ENCODE measurements at regions of chr1 and their contacts with region 1.

Region 1: GRCh38 chr1:173212952-173213491 is 5.9 kb upstream of the TNFSF4 start:
- DNase-seq: no peak
- H3K4me3 ChIP-seq: no peak overlapping the region
- H3K27ac ChIP-seq: no peak overlapping the region
- H3K4me1 ChIP-seq: no peaks in the 10 kb centered on the region
- H3K27me3 ChIP-seq: no peaks in the 10 kb centered on the region
- CTCF ChIP-seq: no peak
- POLR2A ChIP-seq: no peak

Region 2: GRCh38 chr1:171457412-171457811 is 1755.6 kb before region 1 on chr1:
- intact Hi-C with region 1: no loop called
- DNase-seq: no peak
- H3K4me3 ChIP-seq: no peak overlapping the region
- H3K27ac ChIP-seq: no peak overlapping the region
- H3K4me1 ChIP-seq: no peaks in the 10 kb centered on the region
- H3K27me3 ChIP-seq: no peaks in the 10 kb centered on the region
- CTCF ChIP-seq: no peak
- POLR2A ChIP-seq: no peak

Region 3: DNA sequence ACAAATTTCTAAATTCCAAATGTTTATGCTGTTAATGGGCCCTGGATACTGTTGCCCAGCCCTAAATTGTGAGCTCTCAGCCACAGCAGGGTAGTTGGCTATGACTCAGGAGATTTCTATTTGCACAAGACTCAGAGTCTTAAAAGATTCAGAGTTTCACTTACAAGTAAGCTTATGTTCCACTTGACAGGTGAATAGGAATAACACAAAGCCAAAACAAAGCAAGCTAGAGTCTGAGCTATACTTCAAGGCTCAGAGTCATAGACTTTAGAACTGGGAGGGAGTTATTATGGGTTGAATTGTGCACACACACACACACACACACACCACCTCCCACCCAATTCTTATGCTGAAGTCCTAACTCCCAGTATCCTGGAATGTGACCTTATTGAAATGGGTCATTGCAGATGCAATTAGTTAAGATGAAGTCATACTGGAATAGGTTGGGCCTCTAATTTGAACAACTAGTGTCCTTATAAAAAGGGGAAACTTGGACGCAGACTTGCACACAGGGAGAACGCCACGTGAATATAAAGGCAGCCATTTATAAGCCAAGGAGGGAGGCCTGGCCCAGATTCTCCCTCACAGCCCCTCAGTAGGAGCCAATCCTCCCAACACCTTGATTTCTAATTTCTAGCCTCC is 294.3 kb after region 1 on chr1:
- intact Hi-C with region 1: loop called (anchors 5 kb)
- DNase-seq: no peak
- H3K4me3 ChIP-seq: no peak overlapping the region
- H3K27ac ChIP-seq: no peak overlapping the region
- H3K4me1 ChIP-seq: no peaks in the 10 kb centered on the region
- H3K27me3 ChIP-seq: no peaks in the 10 kb centered on the region
- CTCF ChIP-seq: no peak
- POLR2A ChIP-seq: no peak